Activated CD4-positive, alpha-beta memory T cell treated with anti-CD3 and anti-CD28 coated beads, Interleukin-2, amount 10 ng/mL, durations not matched to agents 7 days and 5 days (primary cell): ENCODE measurements at regions of chr17 and their contacts with region 1.

Region 1: DNA sequence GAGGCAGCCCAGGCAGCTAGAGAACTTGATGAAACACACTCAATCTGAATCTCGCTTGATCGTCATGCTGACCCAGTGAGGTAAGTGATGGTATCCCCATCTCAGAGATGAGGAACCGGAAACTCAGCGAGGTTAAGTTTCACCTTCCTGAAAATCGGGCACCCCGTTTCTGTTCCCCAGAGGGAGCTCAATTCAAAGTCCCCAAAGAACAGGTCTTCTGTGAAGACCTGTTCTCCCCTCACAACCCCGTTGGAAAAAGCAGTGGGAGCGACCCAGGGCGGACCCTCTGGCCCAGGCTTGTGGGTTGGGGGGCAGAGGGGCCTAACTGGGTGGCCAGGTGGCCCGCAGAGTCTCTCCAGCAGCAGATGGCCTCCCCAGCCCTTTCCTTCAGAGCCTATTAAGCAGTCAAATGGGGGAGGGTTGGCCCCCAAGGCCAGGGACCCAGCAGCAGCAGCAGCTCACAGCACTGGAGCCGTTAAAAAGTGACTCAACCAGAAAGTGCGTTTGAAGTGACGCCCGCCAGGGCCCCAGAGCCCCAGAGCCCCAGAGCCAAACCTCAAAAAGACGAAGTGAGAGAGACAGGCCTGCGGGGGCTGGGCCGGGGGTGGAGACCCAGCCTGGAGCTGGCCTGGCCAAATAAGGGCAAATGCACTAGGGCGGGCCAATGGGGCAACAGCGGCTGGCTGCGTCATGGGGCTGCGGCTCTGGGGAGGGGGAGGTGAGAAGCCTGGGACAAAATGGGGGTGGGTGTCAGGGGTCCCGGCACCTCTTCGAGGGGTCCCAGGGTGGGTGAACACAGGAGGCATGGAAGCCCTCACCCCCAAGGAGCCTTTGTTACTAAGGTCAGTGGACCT is 9.2 kb upstream of the TSPOAP1 start:
- DNase-seq: peak; percentile 96
- H3K4me3 Mint-ChIP-seq: peak overlapping the region; percentile 98
- H3K27ac Mint-ChIP-seq: peak overlapping the region; percentile 100
- H3K4me1 Mint-ChIP-seq: peaks cover 52% of the 10 kb centered on the region
- H3K27me3 Mint-ChIP-seq: no peaks in the 10 kb centered on the region

Region 2: DNA sequence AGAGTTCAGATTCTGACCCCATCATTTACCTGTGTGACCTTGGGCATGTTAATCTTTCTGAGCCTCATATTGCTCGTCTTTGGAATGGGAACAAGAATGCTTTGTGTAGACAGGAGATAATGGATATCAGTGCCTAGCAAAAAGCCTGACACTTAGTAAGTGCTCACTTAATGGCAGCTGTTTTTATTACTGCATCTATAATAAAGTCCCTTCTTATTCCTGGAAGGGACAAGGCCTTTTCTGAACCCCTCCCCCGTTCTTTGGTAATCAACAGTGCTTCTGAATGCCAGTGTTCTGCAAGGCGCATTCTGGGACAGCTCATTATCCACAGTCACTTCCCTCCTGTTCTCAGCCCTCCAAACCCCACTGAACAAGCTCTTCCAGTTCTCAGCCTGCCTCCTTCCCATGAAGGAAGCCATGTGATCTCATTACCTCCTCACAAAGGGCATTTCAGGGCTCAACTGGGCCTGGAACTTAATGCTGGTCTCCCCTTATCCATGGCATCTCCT is 39.3 kb after region 1 on chr17:
- CTCF ChIA-PET with region 1: no interaction called
- POLR2A ChIA-PET with region 1: interaction called, 11 read pairs
- DNase-seq: no peak
- H3K4me3 Mint-ChIP-seq: no peak overlapping the region
- H3K27ac Mint-ChIP-seq: no peak overlapping the region
- H3K4me1 Mint-ChIP-seq: peaks cover 22% of the 10 kb centered on the region
- H3K27me3 Mint-ChIP-seq: no peaks in the 10 kb centered on the region